Activated T-helper 2 cell treated with anti-CD3 and anti-CD28 coated beads, Interferon-gamma antibody, Interleukin-2, Interleukin-4, amounts not matched to agents 10 μg/mL and 5 μg/mL and 100 μg/mL, durations not matched to agents 14 hours and 24 hours and 36 hours (primary cell): ENCODE measurements at regions of chr1 and their contacts with region 1.

Region 1: GRCh38 chr1:40979233-40980067 is at the start of gene CTPS1:
- DNase-seq: peak; percentile 91
- H3K4me3 Mint-ChIP-seq: peak within 1 kb of the TSS; percentile 98
- H3K27ac Mint-ChIP-seq: peak within 1 kb of the TSS; percentile 97
- H3K4me1 Mint-ChIP-seq: peaks cover 56% of the 10 kb centered on the region
- H3K27me3 Mint-ChIP-seq: no peaks in the 10 kb centered on the region
- total RNA-seq, gene CTPS1: 124 and 127 TPM in 2 replicates

Region 2: GRCh38 chr1:41003640-41004220 is 24.3 kb after region 1 on chr1:
- intact Hi-C with region 1: loop called (anchors 1 kb)
- DNase-seq: peak; percentile 75
- H3K4me3 Mint-ChIP-seq: no peak overlapping the region
- H3K27ac Mint-ChIP-seq: peak overlapping the region; percentile 33
- H3K4me1 Mint-ChIP-seq: peaks cover 27% of the 10 kb centered on the region
- H3K27me3 Mint-ChIP-seq: no peaks in the 10 kb centered on the region

Region 3: DNA sequence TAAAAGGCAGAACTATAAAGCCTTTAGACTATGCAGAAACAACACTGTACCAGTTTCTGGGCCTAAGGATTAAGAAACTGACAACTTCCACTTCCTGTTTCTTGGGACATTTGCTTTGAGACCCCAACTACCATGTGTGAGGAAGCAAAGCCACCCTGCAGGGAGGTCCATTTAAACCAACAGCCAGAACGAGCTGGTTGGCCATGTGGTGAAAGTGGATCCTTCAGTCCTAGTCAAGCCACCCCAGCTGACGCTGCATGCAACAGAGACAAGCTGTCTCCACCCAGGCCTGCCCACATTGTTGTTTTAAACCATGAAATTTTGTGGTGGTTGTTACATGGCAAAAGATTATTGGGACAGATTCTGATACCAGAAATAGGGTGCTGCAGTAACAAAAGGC is 73.9 kb after region 1 on chr1:
- intact Hi-C with region 1: no loop called
- DNase-seq: no peak
- H3K4me3 Mint-ChIP-seq: no peak overlapping the region
- H3K27ac Mint-ChIP-seq: no peak overlapping the region
- H3K4me1 Mint-ChIP-seq: peaks cover 2% of the 10 kb centered on the region
- H3K27me3 Mint-ChIP-seq: no peaks in the 10 kb centered on the region

Region 4: DNA sequence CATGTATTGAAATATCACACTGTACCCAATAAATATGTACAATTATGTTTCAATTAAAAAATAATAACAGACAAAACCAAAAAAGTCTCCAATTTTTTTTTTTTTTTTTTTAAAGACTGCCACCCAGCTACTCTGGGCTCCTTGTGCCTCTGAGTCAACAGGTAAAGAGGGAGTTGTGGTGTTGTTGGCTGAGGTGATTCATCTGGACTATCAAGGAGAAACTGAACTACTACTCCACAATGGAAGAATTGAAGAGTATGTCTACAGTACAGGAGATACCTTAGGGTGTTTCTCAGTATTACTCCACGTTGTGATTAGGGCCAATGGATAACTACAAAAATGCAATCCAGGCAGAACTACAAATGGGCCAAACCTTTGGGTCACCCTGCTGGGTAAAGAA is 194.7 kb after region 1 on chr1:
- intact Hi-C with region 1: no loop called
- DNase-seq: no peak
- H3K4me3 Mint-ChIP-seq: no peak overlapping the region
- H3K27ac Mint-ChIP-seq: no peak overlapping the region
- H3K4me1 Mint-ChIP-seq: no peaks in the 10 kb centered on the region
- H3K27me3 Mint-ChIP-seq: no peaks in the 10 kb centered on the region

Region 5: GRCh38 chr1:41241782-41242341 is 262.4 kb after region 1 on chr1 and contains the start of gene SCMH1:
- intact Hi-C with region 1: loop called (anchors 10 kb)
- DNase-seq: peak; percentile 42
- H3K4me3 Mint-ChIP-seq: peak within 1 kb of the TSS; percentile 84
- H3K27ac Mint-ChIP-seq: peak within 1 kb of the TSS; percentile 82
- H3K4me1 Mint-ChIP-seq: peaks cover 31% of the 10 kb centered on the region
- H3K27me3 Mint-ChIP-seq: peaks cover 7% of the 10 kb centered on the region
- total RNA-seq, gene SCMH1: 19.0 and 20.3 TPM in 2 replicates